ENCODE measurements at regions of chr5 and their contacts with region 1.

Region 1: DNA sequence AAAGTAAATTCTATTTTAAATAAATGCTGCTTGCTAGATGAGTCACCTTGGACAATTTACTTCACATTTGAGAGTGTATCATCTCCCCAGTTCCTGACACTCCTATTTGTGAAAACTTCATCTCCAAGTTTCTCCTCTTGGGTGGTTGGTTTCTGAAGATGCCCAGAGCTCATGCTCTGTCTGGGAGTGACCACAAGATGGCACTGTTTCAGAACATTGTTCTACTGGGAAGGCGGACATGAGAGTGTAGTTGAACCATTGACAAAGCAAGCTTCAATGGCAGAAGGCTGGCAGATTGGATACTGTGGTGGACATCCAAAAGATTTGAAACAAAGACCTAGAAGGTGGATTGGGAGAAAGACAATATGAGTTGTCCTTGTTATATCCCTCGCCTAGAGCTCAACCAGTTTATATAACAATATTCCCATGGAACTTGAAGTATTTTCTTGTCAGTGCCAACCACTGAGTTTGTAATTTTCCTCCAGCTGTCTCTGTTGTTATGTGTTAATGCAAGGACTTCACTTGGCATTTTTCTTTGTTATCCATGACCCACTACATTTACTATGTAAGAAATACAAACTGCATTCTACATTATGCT is 234.3 kb upstream of the ANKH start:
- DNase-seq: peak in 4 of 10 donors; percentile 20 to 61 (median 34)
- H3K4me3 ChIP-seq: no peak overlapping the region
- H3K27ac ChIP-seq: no peak overlapping the region
- H3K27me3 ChIP-seq: peaks cover 0 to 3% (median 0%) of the 10 kb centered on the region in 45 donors
- CTCF ChIP-seq: peak; percentile 50 to 85 (median 76)

Region 2: DNA sequence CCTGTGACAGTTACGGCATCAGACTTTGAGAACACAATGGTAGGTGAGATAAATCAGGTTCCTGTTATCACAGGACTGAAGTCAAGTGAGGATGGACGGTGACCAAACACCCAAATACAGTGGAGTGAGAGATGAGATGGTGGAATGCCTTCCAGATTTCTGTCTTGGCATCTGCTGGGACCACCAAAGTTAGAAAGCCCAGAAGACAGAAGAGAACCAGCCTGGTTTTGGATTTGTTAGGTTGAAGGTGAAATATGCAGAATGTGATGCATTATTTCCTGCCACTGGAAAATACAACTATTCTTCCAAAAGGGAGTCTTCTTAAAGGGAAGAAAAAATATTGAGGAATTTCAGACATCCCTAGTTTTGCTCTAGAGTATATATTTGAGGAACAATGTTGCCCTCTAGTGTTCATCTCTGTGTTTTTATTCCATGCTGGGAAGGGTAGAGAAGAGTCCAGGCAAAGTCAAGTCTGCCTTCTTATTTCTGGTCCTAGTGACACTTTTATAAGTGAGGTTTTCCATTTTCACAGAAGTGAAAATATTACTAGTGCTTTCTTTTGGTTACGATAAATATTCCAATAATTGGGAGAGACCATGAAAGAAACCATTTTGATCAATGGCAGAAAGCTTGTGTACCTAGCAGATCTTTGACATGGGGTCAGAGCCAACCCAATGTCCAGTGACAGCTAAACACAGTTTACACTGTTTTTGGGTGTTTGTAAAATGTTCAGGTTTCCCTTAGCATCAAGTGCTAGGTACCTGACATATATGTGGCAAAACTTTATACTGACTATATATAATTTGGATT is 92.0 kb before region 1 on chr5:
- intact Hi-C with region 1: no loop called
- DNase-seq: no peak
- H3K4me3 ChIP-seq: no peak overlapping the region
- H3K27ac ChIP-seq: no peak overlapping the region
- H3K27me3 ChIP-seq: no peaks in the 10 kb centered on the region
- CTCF ChIP-seq: peak; percentile 61 to 92 (median 78)

Region 3: DNA sequence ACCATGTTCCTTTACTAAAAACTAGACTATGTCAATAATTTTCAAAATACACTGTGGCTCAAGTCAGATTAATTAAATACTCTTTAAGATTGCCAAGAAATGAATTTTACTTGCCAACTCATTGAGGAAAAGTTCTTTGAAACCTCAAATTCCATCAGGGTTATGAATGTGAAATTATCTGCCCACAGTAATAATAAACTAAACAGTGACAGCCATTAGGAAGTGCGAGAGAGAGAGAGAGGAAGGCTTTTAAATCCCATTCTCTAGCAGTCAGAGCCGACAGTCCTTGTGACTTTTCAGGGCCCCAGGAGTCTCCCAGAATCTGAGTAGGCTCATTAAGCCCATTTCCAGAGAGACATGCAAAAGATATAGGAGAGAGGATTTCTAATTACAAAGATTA is 837.6 kb after region 1 on chr5:
- intact Hi-C with region 1: loop called in 1 of 2 experiments (anchors 5 kb)
- DNase-seq: no peak
- H3K4me3 ChIP-seq: no peak overlapping the region
- H3K27ac ChIP-seq: no peak overlapping the region
- H3K27me3 ChIP-seq: no peaks in the 10 kb centered on the region
- CTCF ChIP-seq: no peak

Region 4: GRCh38 chr5:15995341-15996052 is 889.6 kb after region 1 on chr5:
- intact Hi-C with region 1: loop called in 1 of 2 experiments (anchors 2 kb)
- DNase-seq: peak in 1 of 10 donors; percentile 4
- H3K4me3 ChIP-seq: no peak overlapping the region
- H3K27ac ChIP-seq: no peak overlapping the region
- H3K27me3 ChIP-seq: no peaks in the 10 kb centered on the region
- CTCF ChIP-seq: peak in 52 of 56 donors; percentile 33 to 69 (median 50)

Measured in dorsolateral prefrontal cortex (tissue), 120 donors.